HepG2 (cell line): ENCODE measurements at regions of chr3 and their contacts with region 1.

Region 1: DNA sequence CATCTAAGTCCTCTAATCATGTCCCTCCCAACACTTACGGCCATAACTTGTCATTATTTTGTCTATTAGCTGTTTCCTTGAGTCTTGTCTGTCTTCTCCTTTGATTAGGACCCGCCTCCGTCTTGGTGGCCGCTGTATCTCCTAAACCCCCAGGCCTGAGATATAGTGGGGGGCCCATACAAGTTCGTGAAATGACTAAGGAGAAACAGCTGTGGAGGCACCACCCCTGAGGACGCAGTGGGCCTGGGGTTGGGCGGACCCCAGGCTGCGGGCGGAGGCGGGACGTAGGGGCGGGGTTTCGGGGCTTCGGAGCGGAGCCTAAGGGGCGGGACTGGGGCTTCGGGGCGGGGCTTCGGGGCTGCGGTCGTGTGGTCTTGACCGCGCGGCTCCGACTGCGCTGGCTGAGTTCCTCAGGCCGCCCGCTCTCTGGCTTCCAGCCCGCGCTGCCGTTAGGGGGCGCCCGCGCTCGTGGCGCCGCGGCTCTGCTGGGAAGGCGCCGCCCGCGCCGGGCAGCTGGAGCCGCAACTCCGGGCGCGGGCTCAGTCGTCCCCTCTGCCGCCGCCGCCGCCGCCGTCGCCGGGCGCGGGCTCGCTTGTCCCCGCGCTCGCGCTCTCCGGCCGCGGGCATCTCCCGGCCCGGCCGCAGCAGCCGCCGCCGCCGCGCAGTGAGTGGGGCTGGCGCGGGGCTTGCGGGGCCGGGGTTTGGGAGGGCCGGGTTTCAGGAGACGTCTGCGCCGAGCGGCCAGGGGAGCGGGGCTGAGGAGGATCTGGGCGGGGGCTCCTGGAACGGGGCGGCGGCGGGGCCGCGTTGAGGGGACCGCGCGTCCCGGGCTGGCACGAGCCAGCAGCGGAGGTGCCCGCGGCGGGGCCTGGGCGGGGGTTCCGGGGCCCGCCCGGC is at the start of gene KCTD6:
- DNase-seq: peak; percentile 81
- ATAC-seq: peak; percentile 93
- H3K4me3 ChIP-seq: peak within 1 kb of the TSS; percentile 69 to 83 (median 78)
- H3K27ac ChIP-seq: peak within 1 kb of the TSS; percentile 42
- H3K4me1 ChIP-seq: peaks cover 84% of the 10 kb centered on the region
- H3K27me3 ChIP-seq: no peaks in the 10 kb centered on the region; a peak in 3 of 5 replicates
- CTCF ChIP-seq: peak; percentile 82
- EP300 ChIP-seq: peak in 1 of 2 experiments; percentile 19; a peak in 1 of 4 replicates
- POLR2A ChIP-seq: no peak; a peak in 1 of 4 replicates
- RAD21 ChIP-seq: peak; percentile 98
- total RNA-seq, gene KCTD6: 14.0 and 14.2 TPM in 2 replicates

Region 2: DNA sequence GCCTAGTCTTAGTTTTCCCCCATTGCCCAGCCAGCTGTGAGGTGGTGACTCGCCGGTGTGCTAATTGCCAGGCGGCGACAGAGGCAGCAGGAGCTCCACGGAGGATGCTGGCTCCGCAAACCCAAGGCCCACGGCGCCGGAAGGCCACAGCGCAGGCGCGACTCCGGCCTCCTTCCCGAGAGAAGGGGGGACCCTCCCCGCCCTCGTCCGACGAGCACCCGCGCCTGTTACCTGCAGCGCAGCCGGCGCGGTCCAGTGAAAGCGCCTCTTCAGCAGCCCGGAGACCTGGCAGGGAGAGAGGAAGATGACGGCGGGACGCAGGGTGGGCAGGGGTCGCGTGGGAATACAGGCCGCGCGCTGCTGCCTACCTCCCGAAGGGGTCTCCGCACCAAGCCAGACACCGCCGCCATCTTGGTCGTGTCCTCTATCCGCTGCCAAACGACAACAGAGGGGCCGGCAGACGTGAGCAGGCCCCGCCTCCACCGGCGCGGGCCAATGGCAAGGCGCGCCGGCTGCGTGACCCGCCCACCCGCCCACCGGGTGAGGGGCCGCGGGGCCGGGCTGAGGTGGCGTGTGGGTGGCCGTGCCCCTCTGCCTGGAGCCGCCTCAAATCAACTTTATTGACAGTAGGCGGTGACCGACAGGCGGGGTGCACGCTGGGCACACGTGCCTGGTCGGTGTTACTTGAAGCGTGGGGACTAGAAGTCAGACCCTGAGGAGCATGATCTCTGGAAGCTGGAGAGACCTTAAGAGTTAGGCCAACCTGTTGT is 58.2 kb before region 1 on chr3 and contains the start of gene PDHB:
- CTCF ChIA-PET with region 1: no interaction called
- POLR2A ChIA-PET with region 1: interaction called, 3 read pairs
- in situ Hi-C with region 1: no loop called
- intact Hi-C with region 1: loop called (anchors 5 kb)
- DNase-seq: peak; percentile 77
- ATAC-seq: peak; percentile 97
- H3K4me3 ChIP-seq: peak within 1 kb of the TSS; percentile 68 to 97 (median 93)
- H3K27ac ChIP-seq: peak within 1 kb of the TSS; percentile 92
- H3K4me1 ChIP-seq: peaks cover 53% of the 10 kb centered on the region
- H3K27me3 ChIP-seq: peaks cover 0 to 1% of the 10 kb centered on the region in 2 experiments; a peak in 1 of 5 replicates
- CTCF ChIP-seq: peak; percentile 22; the same call in 1 of the 2 replicates
- EP300 ChIP-seq: peak in 1 of 2 experiments; percentile 73; a peak in 2 of 4 replicates
- POLR2A ChIP-seq: peak; percentile 86 to 93
- RAD21 ChIP-seq: peak; percentile 40
- total RNA-seq, gene PDHB: 153 and 229 TPM in 2 replicates

Region 3: GRCh38 chr3:58471025-58471887 is 20.5 kb before region 1 on chr3:
- CTCF ChIA-PET with region 1: no interaction called
- POLR2A ChIA-PET with region 1: interaction called, 26 read pairs
- in situ Hi-C with region 1: no loop called
- intact Hi-C with region 1: loop called (anchors 2 kb)
- DNase-seq: peak; percentile 95
- ATAC-seq: peak; percentile 91
- H3K4me3 ChIP-seq: peak overlapping the region; percentile 8 to 58 (median 33); a peak in 3 of 6 replicates
- H3K27ac ChIP-seq: peak overlapping the region; percentile 84
- H3K4me1 ChIP-seq: peaks cover 73% of the 10 kb centered on the region
- H3K27me3 ChIP-seq: no peaks in the 10 kb centered on the region
- CTCF ChIP-seq: no peak
- EP300 ChIP-seq: peak; percentile 81 to 92
- POLR2A ChIP-seq: peak in 1 of 2 experiments; percentile 60; a peak in 2 of 4 replicates
- RAD21 ChIP-seq: no peak; the same call in 1 of the 2 replicates

Region 4: DNA sequence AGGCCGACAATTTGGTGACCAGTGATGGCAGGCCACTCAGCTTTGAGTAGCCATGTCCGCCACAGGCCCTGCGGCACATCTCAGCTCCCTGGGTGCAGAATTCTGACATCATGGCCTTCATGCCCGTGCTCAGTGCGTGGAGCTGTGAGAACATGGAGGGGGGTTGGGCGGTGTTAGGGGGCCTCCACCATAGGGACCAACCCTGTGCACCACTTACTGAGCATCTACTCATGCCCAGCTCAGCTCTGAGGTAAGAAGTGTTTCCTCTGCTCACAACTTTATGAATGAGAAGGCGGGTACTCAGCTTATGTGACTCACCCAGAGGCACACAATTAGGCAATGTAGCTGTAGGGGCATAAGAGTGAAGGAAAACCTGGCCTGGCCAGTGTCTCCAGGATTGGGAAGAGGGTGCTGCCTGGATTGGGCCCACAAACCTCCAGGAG is 34.8 kb after region 1 on chr3:
- CTCF ChIA-PET with region 1: interaction called, 3 read pairs
- POLR2A ChIA-PET with region 1: interaction called, 17 read pairs
- in situ Hi-C with region 1: no loop called
- intact Hi-C with region 1: no loop called
- DNase-seq: peak; percentile 88
- ATAC-seq: peak; percentile 76
- H3K4me3 ChIP-seq: peak overlapping the region in 1 of 3 experiments; percentile 24; a peak in 2 of 6 replicates
- H3K27ac ChIP-seq: no peak overlapping the region
- H3K4me1 ChIP-seq: peaks cover 66% of the 10 kb centered on the region
- H3K27me3 ChIP-seq: no peaks in the 10 kb centered on the region
- CTCF ChIP-seq: no peak
- EP300 ChIP-seq: peak in 1 of 2 experiments; percentile 75; a peak in 1 of 4 replicates
- POLR2A ChIP-seq: peak; percentile 49 to 56; a peak in 2 of 4 replicates
- RAD21 ChIP-seq: peak; percentile 13; the same call in 1 of the 2 replicates